ENCODE measurements at regions of chrX and their contacts with region 1.

Region 1: GRCh38 chrX:71550578-71550977 is 17.7 kb downstream of the OGT start:
- DNase-seq: no peak
- ATAC-seq: no peak
- H3K4me3 ChIP-seq: no peak overlapping the region
- H3K27ac ChIP-seq: no peak overlapping the region
- H3K4me1 ChIP-seq: peaks cover 4% of the 10 kb centered on the region; the same call in 1 of the 2 replicates
- H3K27me3 ChIP-seq: no peaks in the 10 kb centered on the region
- CTCF ChIP-seq: no peak

Region 2: GRCh38 chrX:71378732-71379131 is 171.8 kb before region 1 on chrX:
- CTCF ChIA-PET with region 1: no interaction called
- POLR2A ChIA-PET with region 1: no interaction called
- intact Hi-C with region 1: loop called (anchors 10 kb)
- DNase-seq: no peak
- ATAC-seq: no peak
- H3K4me3 ChIP-seq: no peak overlapping the region
- H3K27ac ChIP-seq: no peak overlapping the region
- H3K4me1 ChIP-seq: no peaks in the 10 kb centered on the region
- H3K27me3 ChIP-seq: no peaks in the 10 kb centered on the region
- CTCF ChIP-seq: no peak

Region 3: DNA sequence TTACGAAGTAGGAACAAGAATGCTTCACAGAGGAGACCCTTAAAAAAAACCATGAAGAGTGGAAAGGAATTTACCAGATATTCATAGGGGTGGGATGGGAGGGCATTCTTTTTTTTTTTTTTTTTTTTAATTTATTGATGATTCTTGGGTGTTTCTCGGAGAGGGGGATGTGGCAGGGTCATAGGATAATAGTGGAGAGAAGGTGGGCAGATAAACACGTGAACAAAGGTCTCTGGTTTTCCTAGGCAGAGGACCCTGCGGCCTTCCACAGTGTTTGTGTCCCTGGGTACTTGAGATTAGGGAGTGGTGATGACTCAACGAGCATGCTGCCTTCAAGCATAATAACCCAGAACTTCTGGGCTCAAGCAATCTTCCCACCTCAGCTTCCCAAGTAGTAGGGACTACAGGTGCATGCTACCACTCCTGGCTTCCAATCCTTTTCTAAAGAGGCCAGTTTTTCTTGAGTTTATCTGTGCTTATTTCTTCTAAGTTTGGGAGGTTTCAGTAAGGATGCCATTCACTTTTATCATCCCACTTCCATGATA is 83.5 kb before region 1 on chrX:
- CTCF ChIA-PET with region 1: no interaction called
- POLR2A ChIA-PET with region 1: no interaction called
- intact Hi-C with region 1: no loop called
- DNase-seq: no peak
- ATAC-seq: no peak
- H3K4me3 ChIP-seq: no peak overlapping the region
- H3K27ac ChIP-seq: no peak overlapping the region
- H3K4me1 ChIP-seq: no peaks in the 10 kb centered on the region
- H3K27me3 ChIP-seq: no peaks in the 10 kb centered on the region
- CTCF ChIP-seq: no peak

Measured in PC-3 (cell line).